Left ventricle myocardium superior (tissue), 1 donor: ENCODE measurements at regions of chr12 and their contacts with region 1.

Region 1: DNA sequence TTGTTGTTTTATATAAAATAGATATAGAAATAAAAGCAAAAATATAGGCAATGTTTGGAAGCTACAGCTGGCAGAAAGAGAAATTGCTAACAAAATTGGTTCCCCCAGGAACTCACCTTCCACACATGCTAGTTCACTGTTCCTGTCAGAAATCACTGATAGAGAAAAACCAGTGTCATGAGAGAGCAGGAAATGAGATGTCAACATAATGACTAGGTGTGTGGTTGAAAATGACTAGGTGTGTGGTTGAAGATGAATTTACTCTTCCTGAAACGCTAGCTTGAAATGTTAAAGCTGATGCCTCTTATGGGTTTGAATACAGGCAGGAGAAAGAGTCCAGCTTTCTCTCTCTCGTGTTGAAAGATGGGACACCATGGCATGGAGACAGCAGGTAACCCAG is 216.3 kb downstream of the C12orf42 start:
- DNase-seq: no peak
- ATAC-seq: no peak

Region 2: DNA sequence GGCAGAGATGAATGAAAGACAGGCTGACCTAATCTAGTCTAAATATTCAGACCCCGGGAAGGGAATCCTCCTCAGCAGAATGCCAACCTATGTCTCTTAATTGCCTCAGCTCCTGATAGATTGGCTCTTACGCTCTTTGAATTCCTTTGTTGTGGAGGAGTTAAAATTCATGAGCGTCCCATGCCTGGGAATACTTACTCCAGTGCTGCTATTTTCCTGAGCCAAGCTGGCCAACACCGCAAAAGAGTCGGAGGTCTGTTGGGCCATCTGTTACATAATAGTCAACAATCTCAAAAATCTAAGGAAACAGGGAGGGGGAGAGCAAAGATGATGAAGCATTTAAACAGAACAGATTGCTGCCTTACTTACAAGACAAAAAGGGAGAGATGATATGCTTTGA is 139.2 kb before region 1 on chr12:
- intact Hi-C with region 1: loop called (anchors 5 kb)
- DNase-seq: no peak
- ATAC-seq: no peak

Region 3: GRCh38 chr12:103415681-103416080 is 136.2 kb after region 1 on chr12:
- intact Hi-C with region 1: no loop called
- DNase-seq: no peak
- ATAC-seq: no peak

Region 4: GRCh38 chr12:103495479-103496456 is 216.3 kb after region 1 on chr12 and contains the start of gene C12orf42:
- intact Hi-C with region 1: no loop called
- DNase-seq: peak; percentile 43
- ATAC-seq: peak; percentile 66
- total RNA-seq, gene C12orf42: not detected